ENCODE measurements at regions of chr1 and their contacts with region 1.

Region 1: GRCh38 chr1:36576118-36576517 is 93.4 kb upstream of the CSF3R start:
- DNase-seq: peak; percentile 91
- H3K4me3 ChIP-seq: peak overlapping the region in 1 of 2 experiments; percentile 32; a peak in 1 of 4 replicates
- H3K27ac ChIP-seq: no peak overlapping the region
- H3K4me1 ChIP-seq: no peaks in the 10 kb centered on the region; a peak in 1 of 4 replicates
- H3K27me3 ChIP-seq: no peaks in the 10 kb centered on the region
- CTCF ChIP-seq: peak; percentile 83
- EP300 ChIP-seq: no peak
- RAD21 ChIP-seq: peak; percentile 89

Region 2: GRCh38 chr1:36565576-36566501 is 10.3 kb before region 1 on chr1:
- CTCF ChIA-PET with region 1: interaction called, 36 read pairs
- POLR2A ChIA-PET with region 1: no interaction called
- DNase-seq: no peak
- H3K4me3 ChIP-seq: no peak overlapping the region
- H3K27ac ChIP-seq: no peak overlapping the region
- H3K4me1 ChIP-seq: peaks cover 0 to 6% of the 10 kb centered on the region in 2 experiments; a peak in 1 of 4 replicates
- H3K27me3 ChIP-seq: no peaks in the 10 kb centered on the region
- CTCF ChIP-seq: no peak
- EP300 ChIP-seq: no peak
- RAD21 ChIP-seq: no peak

Region 3: DNA sequence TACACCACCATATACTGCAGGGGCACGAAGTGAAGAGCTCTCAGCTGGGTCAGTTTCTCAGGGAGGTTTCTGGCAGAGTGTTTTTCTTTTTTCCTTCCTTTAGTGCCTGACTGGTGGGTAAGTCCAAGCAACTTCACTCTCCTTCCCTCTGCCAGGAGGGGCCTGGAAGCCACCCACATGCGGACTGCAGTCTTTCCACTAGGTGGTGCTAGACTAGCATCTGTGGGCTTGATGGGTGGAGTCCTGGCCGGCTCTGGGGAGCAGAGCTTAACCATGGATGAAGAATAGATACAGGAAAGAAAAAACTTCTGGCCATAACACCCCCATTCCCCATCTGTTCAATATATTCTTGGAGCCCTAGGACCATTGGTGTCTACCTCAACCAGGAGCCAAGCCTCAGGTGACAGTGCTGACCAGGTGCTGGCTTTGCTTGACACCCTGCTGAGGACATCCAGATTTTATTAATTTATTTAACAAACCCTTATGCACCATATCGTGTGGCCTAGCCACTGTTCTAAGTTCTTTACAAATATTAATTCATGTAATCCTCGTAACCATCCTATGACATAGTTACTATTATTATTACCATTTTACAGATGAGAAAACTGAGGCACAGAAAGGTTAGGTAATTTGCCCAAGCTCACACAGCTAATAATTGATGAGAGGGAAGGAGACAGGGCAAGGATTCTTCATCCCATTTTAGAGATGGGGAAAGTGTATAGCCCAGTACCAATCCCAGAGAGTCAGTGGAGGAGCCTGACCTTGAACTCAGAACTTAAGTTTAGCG is 33.3 kb after region 1 on chr1:
- CTCF ChIA-PET with region 1: interaction called, 14 read pairs
- POLR2A ChIA-PET with region 1: no interaction called
- DNase-seq: peak; percentile 81
- H3K4me3 ChIP-seq: peak overlapping the region in 1 of 2 experiments; percentile 55; a peak in 1 of 4 replicates
- H3K27ac ChIP-seq: no peak overlapping the region
- H3K4me1 ChIP-seq: no peaks in the 10 kb centered on the region
- H3K27me3 ChIP-seq: no peaks in the 10 kb centered on the region
- CTCF ChIP-seq: peak; percentile 66
- EP300 ChIP-seq: no peak
- RAD21 ChIP-seq: peak; percentile 81

Region 4: GRCh38 chr1:36705629-36706028 is 129.5 kb after region 1 on chr1:
- CTCF ChIA-PET with region 1: interaction called, 11 read pairs
- POLR2A ChIA-PET with region 1: no interaction called
- DNase-seq: peak; percentile 40
- H3K4me3 ChIP-seq: no peak overlapping the region
- H3K27ac ChIP-seq: no peak overlapping the region
- H3K4me1 ChIP-seq: peaks cover 0 to 4% of the 10 kb centered on the region in 2 experiments; a peak in 2 of 4 replicates
- H3K27me3 ChIP-seq: no peaks in the 10 kb centered on the region
- CTCF ChIP-seq: no peak
- EP300 ChIP-seq: no peak
- RAD21 ChIP-seq: no peak; the same call in 1 of the 2 replicates

Region 5: GRCh38 chr1:37323486-37324377 is 747.6 kb after region 1 on chr1:
- CTCF ChIA-PET with region 1: interaction called, 11 read pairs
- POLR2A ChIA-PET with region 1: no interaction called
- DNase-seq: peak; percentile 76
- H3K4me3 ChIP-seq: peak overlapping the region in 1 of 2 experiments; percentile 45; a peak in 1 of 4 replicates
- H3K27ac ChIP-seq: no peak overlapping the region
- H3K4me1 ChIP-seq: no peaks in the 10 kb centered on the region
- H3K27me3 ChIP-seq: no peaks in the 10 kb centered on the region
- CTCF ChIP-seq: peak; percentile 54
- EP300 ChIP-seq: no peak
- RAD21 ChIP-seq: peak; percentile 77

Measured in SK-N-SH (cell line).